ENCODE measurements at regions of chr3 and their contacts with region 1.

Region 1: GRCh38 chr3:129927072-129927471 is 33.6 kb upstream of the TMCC1 start:
- DNase-seq: no peak
- ATAC-seq: no peak
- H3K4me3 ChIP-seq: no peak overlapping the region
- H3K27ac ChIP-seq: no peak overlapping the region
- H3K4me1 ChIP-seq: no peaks in the 10 kb centered on the region
- H3K27me3 ChIP-seq: no peaks in the 10 kb centered on the region
- CTCF ChIP-seq: no peak

Region 2: GRCh38 chr3:129490242-129491045 is 436.6 kb before region 1 on chr3:
- intact Hi-C with region 1: loop called in 1 of 3 experiments (anchors 10 kb)
- DNase-seq: peak; percentile 70 to 84 (median 79)
- ATAC-seq: peak; percentile 90 to 97 (median 96)
- H3K4me3 ChIP-seq: no peak overlapping the region
- H3K27ac ChIP-seq: peak overlapping the region in 2 of 4 donors; percentile 29 to 51
- H3K4me1 ChIP-seq: no peaks in the 10 kb centered on the region
- H3K27me3 ChIP-seq: no peaks in the 10 kb centered on the region
- CTCF ChIP-seq: peak; percentile 36 to 86 (median 75)